ENCODE measurements at regions of chr1 and their contacts with region 1.

Region 1: GRCh38 chr1:3910857-3911845 is 11.1 kb upstream of the C1orf174 start:
- DNase-seq: peak; percentile 92
- H3K4me3 ChIP-seq: no peak overlapping the region
- H3K27ac ChIP-seq: no peak overlapping the region
- H3K4me1 ChIP-seq: peaks cover 0 to 34% (median 14%) of the 10 kb centered on the region in 6 donors
- H3K27me3 ChIP-seq: peaks cover 0 to 20% (median 4%) of the 10 kb centered on the region in 7 donors
- CTCF ChIP-seq: peak; percentile 64 to 86 (median 76)
- POLR2A ChIP-seq: no peak

Region 2: DNA sequence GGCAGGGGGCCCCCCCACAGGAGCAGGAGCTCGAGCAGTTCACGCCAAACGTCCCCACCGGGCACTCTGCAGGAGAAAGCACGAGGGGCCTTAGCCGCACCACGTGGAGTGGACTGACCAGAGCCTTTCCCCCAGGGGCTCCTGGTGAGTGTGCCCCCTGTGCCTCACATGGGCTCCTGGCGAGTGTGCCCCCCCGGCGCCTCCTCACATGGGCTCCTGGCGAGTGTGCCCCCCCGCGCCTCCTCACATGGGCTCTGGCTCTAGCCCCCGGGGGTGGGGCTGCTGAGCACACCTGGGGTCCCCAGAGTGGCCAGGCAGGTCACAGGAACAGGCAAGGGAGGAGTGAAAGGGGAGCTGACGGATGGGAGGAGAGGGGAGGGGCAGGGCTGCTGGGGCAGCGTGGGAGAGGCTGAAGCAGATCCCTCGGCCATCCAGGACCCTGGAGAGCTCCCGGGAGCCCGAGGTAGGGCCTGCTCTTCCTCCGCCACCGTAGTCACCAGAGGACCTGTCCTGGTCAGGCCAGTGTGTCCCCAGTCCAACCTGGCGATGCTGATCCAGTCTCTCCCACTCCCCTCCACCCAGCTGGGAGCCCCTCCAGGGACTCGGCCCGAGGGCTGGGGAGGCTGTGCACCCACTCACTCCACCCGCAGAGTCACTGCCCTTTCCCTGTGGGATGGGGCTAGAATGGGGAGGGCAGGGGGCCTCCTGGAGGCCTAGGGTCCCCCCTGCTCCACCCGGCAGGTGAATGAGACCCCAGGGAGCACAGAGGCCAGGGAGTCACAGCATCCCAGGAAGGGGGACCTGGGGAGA is 409.1 kb before region 1 on chr1:
- intact Hi-C with region 1: no loop called
- DNase-seq: peak; percentile 88
- H3K4me3 ChIP-seq: no peak overlapping the region
- H3K27ac ChIP-seq: no peak overlapping the region
- H3K4me1 ChIP-seq: peaks cover 0 to 29% (median 6%) of the 10 kb centered on the region in 6 donors
- H3K27me3 ChIP-seq: no peaks in the 10 kb centered on the region
- CTCF ChIP-seq: no peak
- POLR2A ChIP-seq: no peak

Region 3: GRCh38 chr1:3639397-3639911 is 271.7 kb before region 1 on chr1:
- intact Hi-C with region 1: no loop called
- DNase-seq: peak; percentile 56
- H3K4me3 ChIP-seq: no peak overlapping the region
- H3K27ac ChIP-seq: no peak overlapping the region
- H3K4me1 ChIP-seq: no peaks in the 10 kb centered on the region
- H3K27me3 ChIP-seq: no peaks in the 10 kb centered on the region
- CTCF ChIP-seq: no peak
- POLR2A ChIP-seq: no peak

Region 4: DNA sequence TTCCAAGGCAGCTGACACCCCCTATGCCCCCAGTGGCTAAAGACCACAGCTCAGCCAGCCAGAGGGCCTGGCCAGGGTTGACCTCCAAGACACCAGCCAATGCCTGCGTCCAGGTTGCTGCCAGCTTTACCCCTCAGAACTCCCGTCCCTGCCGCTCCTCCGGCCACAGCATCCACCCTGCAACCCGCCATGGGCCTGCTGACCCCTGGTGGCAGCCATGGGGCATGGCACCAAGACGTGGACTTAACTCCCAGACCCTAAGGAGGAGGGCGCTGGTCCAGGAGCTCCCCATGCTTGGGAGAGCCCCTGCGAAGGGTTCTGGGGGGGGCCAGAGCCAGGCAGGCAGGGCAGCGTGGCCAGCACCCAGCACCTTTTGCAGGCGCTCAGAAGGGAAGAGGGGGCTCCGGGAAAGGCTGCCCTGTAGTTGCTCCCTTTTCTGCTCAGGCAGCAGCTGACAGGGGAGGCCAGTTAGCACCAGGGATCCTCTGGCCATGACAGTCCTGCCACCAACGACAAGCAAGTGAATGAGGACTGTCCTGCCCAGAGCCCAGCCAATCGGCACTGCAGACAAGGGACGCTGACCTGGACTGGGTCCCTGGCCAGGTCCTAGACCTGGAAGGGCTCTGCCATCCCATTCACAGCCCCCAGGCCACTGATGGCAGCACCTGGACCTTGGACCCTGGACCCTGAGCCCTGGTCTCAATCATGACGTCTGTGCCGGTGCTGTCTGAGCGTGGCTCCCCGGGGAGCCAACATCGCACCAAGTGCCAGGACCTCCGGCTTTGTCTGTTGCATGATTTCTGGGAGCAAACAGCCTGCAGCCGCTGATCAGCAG is 1834.8 kb after region 1 on chr1:
- intact Hi-C with region 1: loop called (anchors 5 kb)
- DNase-seq: peak; percentile 86
- H3K4me3 ChIP-seq: no peak overlapping the region
- H3K27ac ChIP-seq: no peak overlapping the region
- H3K4me1 ChIP-seq: no peaks in the 10 kb centered on the region
- H3K27me3 ChIP-seq: peaks cover 0 to 65% (median 13%) of the 10 kb centered on the region in 7 donors
- CTCF ChIP-seq: peak; percentile 52 to 89 (median 80)
- POLR2A ChIP-seq: no peak